Endothelial cell of umbilical vein (primary cell): ENCODE measurements at regions of chr12 and their contacts with region 1.

Region 1: GRCh38 chr12:68559984-68560850 is 50.5 kb upstream of the RAP1B start:
- DNase-seq: peak; percentile 53
- H3K4me3 ChIP-seq: no peak overlapping the region
- H3K27ac ChIP-seq: no peak overlapping the region
- H3K4me1 ChIP-seq: peaks cover 10% of the 10 kb centered on the region
- H3K27me3 ChIP-seq: peaks cover 0 to 2% of the 10 kb centered on the region in 2 experiments
- CTCF ChIP-seq: no peak
- POLR2A ChIP-seq: no peak

Region 2: GRCh38 chr12:68514807-68515410 is 45.3 kb before region 1 on chr12:
- CTCF ChIA-PET with region 1: no interaction called
- POLR2A ChIA-PET with region 1: no interaction called
- dilution Hi-C with region 1: no loop called
- intact Hi-C with region 1: loop called (anchors 2 kb)
- DNase-seq: no peak
- H3K4me3 ChIP-seq: no peak overlapping the region
- H3K27ac ChIP-seq: no peak overlapping the region
- H3K4me1 ChIP-seq: no peaks in the 10 kb centered on the region
- H3K27me3 ChIP-seq: no peaks in the 10 kb centered on the region
- CTCF ChIP-seq: no peak
- POLR2A ChIP-seq: no peak